ENCODE measurements at regions of chr10 and their contacts with region 1.

Region 1: DNA sequence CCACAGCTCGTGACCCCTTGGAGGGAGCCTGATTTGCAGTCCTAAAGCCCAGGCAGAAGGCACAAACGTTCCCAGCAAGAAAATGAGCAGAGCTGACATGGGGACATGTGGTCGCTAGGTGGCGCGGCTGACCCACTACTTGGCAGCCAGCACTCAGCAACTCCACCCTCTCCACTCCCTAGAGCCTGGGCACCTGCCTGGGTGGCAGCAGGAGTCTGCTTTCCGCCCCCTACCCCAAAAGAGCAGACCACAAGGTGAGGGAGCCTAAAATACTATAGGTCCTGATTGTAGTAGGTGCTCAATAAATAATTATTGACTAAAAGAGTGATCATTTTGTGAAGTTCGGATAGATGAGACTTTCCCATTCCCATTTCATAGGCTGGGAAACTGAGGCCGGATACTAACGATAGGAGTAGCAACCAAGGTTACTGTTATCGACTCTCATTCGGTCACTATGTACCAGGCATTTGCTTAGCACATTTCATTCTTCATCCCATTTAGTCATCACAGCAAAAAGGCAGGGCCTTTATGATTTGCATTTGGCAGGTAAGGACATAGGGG is 57.4 kb downstream of the NEUROG3 start:
- DNase-seq: peak; percentile 78 to 87
- ATAC-seq: peak; percentile 96 to 97
- H3K4me3 ChIP-seq: no peak overlapping the region
- H3K27ac ChIP-seq: no peak overlapping the region
- H3K4me1 ChIP-seq: no peaks in the 10 kb centered on the region
- CTCF ChIP-seq: peak; percentile 82
- EP300 ChIP-seq: no peak
- POLR2A ChIP-seq: no peak
- RAD21 ChIP-seq: peak; percentile 88 to 90

Region 2: DNA sequence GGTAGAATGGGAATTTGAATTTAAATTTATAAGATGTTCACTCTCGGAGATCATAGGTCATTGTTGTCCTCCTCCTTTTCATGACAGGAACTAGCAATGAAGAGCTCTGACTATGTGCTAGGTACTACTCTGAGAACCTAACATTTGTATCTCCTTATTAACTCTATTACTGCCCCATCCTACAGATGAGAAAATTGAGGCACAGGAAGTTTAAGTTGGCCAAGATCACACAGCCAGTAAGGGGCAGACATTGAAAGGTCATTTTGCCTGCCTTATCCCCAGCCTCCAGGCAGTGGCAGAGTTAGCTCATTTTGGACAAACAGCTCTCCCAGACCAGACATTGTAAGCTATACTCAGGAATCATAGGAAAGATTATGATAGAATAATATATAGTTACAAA is 421.8 kb before region 1 on chr10:
- CTCF ChIA-PET with region 1: no interaction called
- POLR2A ChIA-PET with region 1: no interaction called
- DNase-seq: peak in 1 of 2 experiments; percentile 55
- ATAC-seq: peak; percentile 65 to 83; a peak in 4 of 6 replicates
- H3K4me3 ChIP-seq: no peak overlapping the region
- H3K27ac ChIP-seq: no peak overlapping the region
- H3K4me1 ChIP-seq: 0 out of 3 replicates have a peak, but pooled peaks cover 5% of the 10 kb centered on the region
- CTCF ChIP-seq: peak; percentile 16; the same call in 1 of the 3 replicates
- EP300 ChIP-seq: no peak
- POLR2A ChIP-seq: no peak
- RAD21 ChIP-seq: peak; percentile 33 to 35; a peak in 4 of 5 replicates

Region 3: DNA sequence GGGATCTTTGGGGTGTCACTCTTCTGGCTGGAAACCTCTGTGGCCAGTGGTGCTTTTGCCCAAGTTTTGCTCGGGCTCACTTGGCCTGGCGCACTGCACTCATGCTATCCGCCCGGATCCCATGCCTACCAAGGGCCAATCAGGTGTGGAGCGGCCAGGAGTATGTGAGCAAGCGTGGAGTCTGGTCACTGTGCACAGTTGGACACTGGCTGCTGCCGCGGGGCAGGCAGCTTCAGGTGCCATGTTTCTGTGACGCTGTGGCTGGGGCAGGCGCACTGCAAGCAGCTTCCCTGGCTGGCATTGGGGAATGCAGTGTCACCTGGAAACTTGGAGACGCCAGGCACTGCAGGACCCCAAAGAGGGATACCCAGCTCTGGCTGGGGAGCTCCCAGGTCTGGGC is 12.2 kb after region 1 on chr10:
- CTCF ChIA-PET with region 1: interaction called, 16 read pairs
- POLR2A ChIA-PET with region 1: interaction called, 7 read pairs
- DNase-seq: no peak
- ATAC-seq: no peak
- H3K4me3 ChIP-seq: no peak overlapping the region
- H3K27ac ChIP-seq: no peak overlapping the region
- H3K4me1 ChIP-seq: no peaks in the 10 kb centered on the region
- CTCF ChIP-seq: no peak
- EP300 ChIP-seq: no peak
- POLR2A ChIP-seq: no peak
- RAD21 ChIP-seq: no peak

Region 4: GRCh38 chr10:69588386-69588785 is 72.6 kb after region 1 on chr10:
- CTCF ChIA-PET with region 1: no interaction called
- POLR2A ChIA-PET with region 1: no interaction called
- DNase-seq: no peak
- ATAC-seq: no peak
- H3K4me3 ChIP-seq: no peak overlapping the region
- H3K27ac ChIP-seq: no peak overlapping the region
- H3K4me1 ChIP-seq: no peaks in the 10 kb centered on the region
- CTCF ChIP-seq: no peak
- EP300 ChIP-seq: no peak
- POLR2A ChIP-seq: no peak
- RAD21 ChIP-seq: no peak

Region 5: GRCh38 chr10:69629897-69630650 is 114.3 kb after region 1 on chr10 and contains the start of gene FAM241B:
- CTCF ChIA-PET with region 1: interaction called, 385 read pairs
- POLR2A ChIA-PET with region 1: no interaction called
- DNase-seq: peak; percentile 70 to 82
- ATAC-seq: peak; percentile 86 to 94
- H3K4me3 ChIP-seq: peak within 1 kb of the TSS; percentile 77
- H3K27ac ChIP-seq: peak within 1 kb of the TSS; percentile 80 to 98
- H3K4me1 ChIP-seq: peaks cover 7% of the 10 kb centered on the region
- CTCF ChIP-seq: peak; percentile 89
- EP300 ChIP-seq: no peak
- POLR2A ChIP-seq: peak; percentile 43
- RAD21 ChIP-seq: peak in 1 of 2 experiments; percentile 51; a peak in 2 of 5 replicates
- polyA plus RNA-seq, gene FAM241B: 17.8 and 22.8 TPM in 2 replicates

Measured in A549 (cell line).